Breast epithelium (tissue), 4 donors: ENCODE measurements at regions of chr12 and their contacts with region 1.

Region 1: GRCh38 chr12:52121824-52122539 is 42.5 kb downstream of the SMIM41 start:
- DNase-seq: no peak
- H3K4me3 ChIP-seq: no peak overlapping the region
- H3K27ac ChIP-seq: no peak overlapping the region
- H3K4me1 ChIP-seq: peaks cover 0 to 6% of the 10 kb centered on the region in 2 donors
- H3K27me3 ChIP-seq: no peaks in the 10 kb centered on the region
- CTCF ChIP-seq: peak; percentile 13 to 51 (median 46)
- POLR2A ChIP-seq: no peak

Region 2: GRCh38 chr12:52066346-52067083 is 55.5 kb before region 1 on chr12:
- intact Hi-C with region 1: loop called (anchors 2 kb)
- DNase-seq: no peak
- H3K4me3 ChIP-seq: no peak overlapping the region
- H3K27ac ChIP-seq: no peak overlapping the region
- H3K4me1 ChIP-seq: peaks cover 0 to 10% of the 10 kb centered on the region in 2 donors
- H3K27me3 ChIP-seq: no peaks in the 10 kb centered on the region
- CTCF ChIP-seq: no peak
- POLR2A ChIP-seq: no peak